Naive thymus-derived CD4-positive, alpha-beta T cell (primary cell): ENCODE measurements at regions of chr18 and their contacts with region 1.

Region 1: DNA sequence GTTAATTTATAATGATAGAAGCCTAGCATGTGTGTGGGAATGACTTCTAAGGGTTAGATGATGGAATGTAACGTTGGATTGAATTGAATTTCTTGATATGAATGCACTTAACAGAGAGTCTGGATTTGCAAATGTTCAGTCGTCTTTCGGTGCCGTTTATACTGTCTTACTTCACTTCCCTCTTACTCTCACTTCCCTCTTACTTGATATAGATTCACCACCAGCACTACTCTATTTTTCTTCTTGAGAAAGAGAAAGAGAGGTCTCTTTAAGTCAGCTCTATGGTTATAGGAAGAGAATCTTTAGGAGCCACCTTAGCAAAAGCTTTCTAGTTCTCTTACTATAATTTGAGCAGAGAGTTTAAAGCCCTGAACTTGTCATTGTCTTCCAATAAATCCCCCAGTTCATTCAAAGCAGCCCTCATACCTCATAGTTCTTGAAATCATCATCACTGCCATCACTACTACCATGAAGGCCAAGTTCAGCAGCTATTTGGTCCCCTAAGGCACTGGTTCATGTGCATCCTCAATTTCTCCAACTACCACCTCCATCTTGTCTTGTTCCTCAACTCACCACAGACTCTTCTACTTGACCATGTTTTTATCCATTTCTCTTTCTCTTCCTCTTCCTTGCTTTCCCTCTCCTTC is 501.7 kb upstream of the TCF4 start:
- DNase-seq: no peak
- ATAC-seq: peak; percentile 38
- H3K4me3 ChIP-seq: no peak overlapping the region
- H3K4me3 Mint-ChIP-seq: no peak overlapping the region
- H3K27ac ChIP-seq: no peak overlapping the region
- H3K27ac Mint-ChIP-seq: no peak overlapping the region
- H3K4me1 ChIP-seq: no peaks in the 10 kb centered on the region
- H3K4me1 Mint-ChIP-seq: no peaks in the 10 kb centered on the region
- H3K27me3 ChIP-seq: no peaks in the 10 kb centered on the region
- H3K27me3 Mint-ChIP-seq: peaks cover 0 to 7% (median 3%) of the 10 kb centered on the region in 5 donors

Region 2: GRCh38 chr18:55927831-55928230 is 161.9 kb before region 1 on chr18:
- CTCF ChIA-PET with region 1: no interaction called
- POLR2A ChIA-PET with region 1: no interaction called
- intact Hi-C with region 1: no loop called
- DNase-seq: no peak
- ATAC-seq: no peak
- H3K4me3 ChIP-seq: no peak overlapping the region
- H3K4me3 Mint-ChIP-seq: no peak overlapping the region
- H3K27ac ChIP-seq: no peak overlapping the region
- H3K27ac Mint-ChIP-seq: no peak overlapping the region
- H3K4me1 ChIP-seq: no peaks in the 10 kb centered on the region
- H3K4me1 Mint-ChIP-seq: no peaks in the 10 kb centered on the region
- H3K27me3 ChIP-seq: no peaks in the 10 kb centered on the region
- H3K27me3 Mint-ChIP-seq: no peaks in the 10 kb centered on the region

Region 3: GRCh38 chr18:56060967-56061541 is 28.7 kb before region 1 on chr18:
- CTCF ChIA-PET with region 1: no interaction called
- POLR2A ChIA-PET with region 1: no interaction called
- intact Hi-C with region 1: loop called in 1 of 2 experiments (anchors 1 kb)
- DNase-seq: no peak
- ATAC-seq: no peak
- H3K4me3 ChIP-seq: no peak overlapping the region
- H3K4me3 Mint-ChIP-seq: no peak overlapping the region
- H3K27ac ChIP-seq: no peak overlapping the region
- H3K27ac Mint-ChIP-seq: no peak overlapping the region
- H3K4me1 ChIP-seq: no peaks in the 10 kb centered on the region
- H3K4me1 Mint-ChIP-seq: no peaks in the 10 kb centered on the region
- H3K27me3 ChIP-seq: no peaks in the 10 kb centered on the region
- H3K27me3 Mint-ChIP-seq: no peaks in the 10 kb centered on the region

Region 4: DNA sequence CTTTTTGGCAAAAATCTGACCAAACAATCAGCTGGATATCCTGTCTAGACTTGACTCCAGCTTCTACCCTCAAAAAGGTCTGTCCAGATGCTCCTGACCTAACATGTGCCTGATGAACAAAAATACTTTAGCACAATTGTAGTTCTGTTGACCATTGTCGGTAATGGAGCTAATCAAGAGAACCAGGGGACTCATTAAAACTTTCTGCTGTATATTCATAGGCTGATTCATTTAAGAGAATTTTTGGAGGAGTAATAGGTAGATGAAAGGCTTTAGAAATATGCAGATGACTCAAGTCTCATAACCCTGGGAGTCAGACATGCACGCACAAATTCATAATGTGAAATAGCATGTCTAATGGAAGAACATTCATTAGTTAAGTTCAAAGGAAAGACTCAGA is 34.5 kb after region 1 on chr18:
- CTCF ChIA-PET with region 1: no interaction called
- POLR2A ChIA-PET with region 1: no interaction called
- intact Hi-C with region 1: no loop called
- DNase-seq: no peak
- ATAC-seq: no peak
- H3K4me3 ChIP-seq: no peak overlapping the region
- H3K4me3 Mint-ChIP-seq: no peak overlapping the region
- H3K27ac ChIP-seq: no peak overlapping the region
- H3K27ac Mint-ChIP-seq: no peak overlapping the region
- H3K4me1 ChIP-seq: no peaks in the 10 kb centered on the region
- H3K4me1 Mint-ChIP-seq: no peaks in the 10 kb centered on the region
- H3K27me3 ChIP-seq: no peaks in the 10 kb centered on the region
- H3K27me3 Mint-ChIP-seq: peaks cover 0 to 12% (median 0%) of the 10 kb centered on the region in 5 donors

Region 5: GRCh38 chr18:57004366-57005121 is 914.8 kb after region 1 on chr18:
- CTCF ChIA-PET with region 1: no interaction called
- POLR2A ChIA-PET with region 1: no interaction called
- intact Hi-C with region 1: no loop called
- DNase-seq: no peak
- ATAC-seq: peak; percentile 67
- H3K4me3 ChIP-seq: no peak overlapping the region
- H3K4me3 Mint-ChIP-seq: peak overlapping the region in 2 of 10 donors; percentile 35 to 37
- H3K27ac ChIP-seq: no peak overlapping the region
- H3K27ac Mint-ChIP-seq: peak overlapping the region in 5 of 9 donors; percentile 41 to 74 (median 46)
- H3K4me1 ChIP-seq: peaks cover 0 to 11% of the 10 kb centered on the region in 2 donors
- H3K4me1 Mint-ChIP-seq: peaks cover 7 to 33% (median 25%) of the 10 kb centered on the region in 7 donors
- H3K27me3 ChIP-seq: no peaks in the 10 kb centered on the region
- H3K27me3 Mint-ChIP-seq: no peaks in the 10 kb centered on the region